ENCODE measurements at regions of chr15 and their contacts with region 1.

Region 1: GRCh38 chr15:68252925-68253534 is 23.5 kb upstream of the CLN6 start:
- DNase-seq: no peak
- H3K4me3 ChIP-seq: no peak overlapping the region
- H3K27ac ChIP-seq: no peak overlapping the region
- H3K4me1 ChIP-seq: peaks cover 0 to 37% (median 17%) of the 10 kb centered on the region in 6 donors
- H3K27me3 ChIP-seq: peaks cover 0 to 19% (median 6%) of the 10 kb centered on the region in 7 donors
- CTCF ChIP-seq: peak; percentile 58 to 83 (median 77)
- POLR2A ChIP-seq: no peak

Region 2: DNA sequence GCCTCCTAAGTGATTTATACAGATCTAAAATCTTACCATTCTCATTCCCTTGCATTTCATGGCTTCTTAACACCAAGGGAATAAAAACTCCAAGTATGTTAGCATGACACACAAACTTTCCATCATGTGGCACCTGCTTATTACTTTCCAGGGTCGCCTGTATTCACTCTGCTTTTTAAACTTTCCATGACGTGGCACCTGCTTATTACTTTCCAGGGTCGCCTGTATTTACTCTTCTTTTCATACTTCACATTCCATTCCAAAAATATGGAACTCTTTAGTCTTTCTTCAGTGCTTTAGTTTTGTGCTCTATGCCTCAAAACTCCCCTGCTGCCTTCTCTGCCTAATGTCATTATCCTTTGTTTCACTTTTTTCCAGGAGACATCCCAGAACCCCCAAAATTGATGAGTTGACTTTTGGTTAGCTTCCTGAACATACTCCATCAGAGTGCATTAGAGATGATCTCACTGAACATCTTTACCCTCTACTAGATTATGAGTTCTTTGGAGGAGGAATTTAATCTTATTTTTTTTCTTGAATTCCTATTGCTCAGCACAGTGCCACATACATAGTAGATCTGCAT is 94.9 kb before region 1 on chr15:
- intact Hi-C with region 1: no loop called
- DNase-seq: no peak
- H3K4me3 ChIP-seq: no peak overlapping the region
- H3K27ac ChIP-seq: no peak overlapping the region
- H3K4me1 ChIP-seq: peaks cover 0 to 10% (median 0%) of the 10 kb centered on the region in 6 donors
- H3K27me3 ChIP-seq: no peaks in the 10 kb centered on the region
- CTCF ChIP-seq: no peak
- POLR2A ChIP-seq: no peak

Region 3: DNA sequence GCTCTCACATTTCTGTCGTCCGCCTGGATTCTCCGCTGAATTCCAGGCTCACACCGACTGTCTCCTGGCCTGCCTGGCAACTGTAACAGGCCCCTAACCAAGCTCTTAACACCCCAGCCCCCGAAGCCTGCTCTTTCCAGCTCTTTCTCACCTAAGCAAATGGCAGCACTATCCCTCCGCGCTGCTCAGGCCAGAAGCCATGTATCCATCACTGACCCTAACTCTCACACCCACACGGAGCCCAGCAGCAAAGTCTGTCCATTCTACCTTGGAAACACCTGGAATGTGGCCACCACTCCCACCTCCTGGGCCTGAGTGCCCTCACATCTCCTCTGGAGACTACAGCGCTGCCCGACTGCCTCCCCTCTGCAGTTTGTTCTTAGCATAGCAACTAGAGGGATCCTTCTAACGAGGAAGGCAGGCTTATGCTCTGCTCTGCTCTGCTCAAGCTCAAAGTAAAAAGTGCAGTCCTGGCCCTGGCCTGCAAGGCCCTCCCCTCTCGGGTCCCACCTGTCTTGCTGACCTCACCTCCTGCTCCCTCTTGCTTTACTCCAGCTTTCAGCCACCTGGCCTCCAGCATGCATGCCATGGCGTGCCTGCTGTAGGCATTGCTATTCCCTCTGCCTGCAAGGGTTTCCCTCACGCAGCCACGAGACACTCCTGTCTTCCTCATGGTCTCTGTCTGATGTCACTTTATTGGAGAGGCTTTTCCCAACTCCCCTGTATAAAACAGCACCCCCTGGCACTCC is 51.7 kb after region 1 on chr15:
- intact Hi-C with region 1: loop called (anchors 10 kb)
- DNase-seq: peak; percentile 62
- H3K4me3 ChIP-seq: no peak overlapping the region
- H3K27ac ChIP-seq: no peak overlapping the region
- H3K4me1 ChIP-seq: peaks cover under 1 to 27% (median 13%) of the 10 kb centered on the region in 6 donors
- H3K27me3 ChIP-seq: peaks cover 0 to 6% (median 0%) of the 10 kb centered on the region in 7 donors
- CTCF ChIP-seq: no peak
- POLR2A ChIP-seq: no peak

Region 4: GRCh38 chr15:68383161-68384074 is 130.4 kb after region 1 on chr15:
- intact Hi-C with region 1: loop called (anchors 10 kb)
- DNase-seq: no peak
- H3K4me3 ChIP-seq: no peak overlapping the region
- H3K27ac ChIP-seq: no peak overlapping the region
- H3K4me1 ChIP-seq: peaks cover 0 to 7% (median 0%) of the 10 kb centered on the region in 6 donors
- H3K27me3 ChIP-seq: peaks cover 0 to 18% (median 0%) of the 10 kb centered on the region in 7 donors
- CTCF ChIP-seq: peak; percentile 46 to 83 (median 74)
- POLR2A ChIP-seq: no peak

Measured in spleen (tissue), 13 donors.